ENCODE measurements at regions of chr20 and their contacts with region 1.

Region 1: DNA sequence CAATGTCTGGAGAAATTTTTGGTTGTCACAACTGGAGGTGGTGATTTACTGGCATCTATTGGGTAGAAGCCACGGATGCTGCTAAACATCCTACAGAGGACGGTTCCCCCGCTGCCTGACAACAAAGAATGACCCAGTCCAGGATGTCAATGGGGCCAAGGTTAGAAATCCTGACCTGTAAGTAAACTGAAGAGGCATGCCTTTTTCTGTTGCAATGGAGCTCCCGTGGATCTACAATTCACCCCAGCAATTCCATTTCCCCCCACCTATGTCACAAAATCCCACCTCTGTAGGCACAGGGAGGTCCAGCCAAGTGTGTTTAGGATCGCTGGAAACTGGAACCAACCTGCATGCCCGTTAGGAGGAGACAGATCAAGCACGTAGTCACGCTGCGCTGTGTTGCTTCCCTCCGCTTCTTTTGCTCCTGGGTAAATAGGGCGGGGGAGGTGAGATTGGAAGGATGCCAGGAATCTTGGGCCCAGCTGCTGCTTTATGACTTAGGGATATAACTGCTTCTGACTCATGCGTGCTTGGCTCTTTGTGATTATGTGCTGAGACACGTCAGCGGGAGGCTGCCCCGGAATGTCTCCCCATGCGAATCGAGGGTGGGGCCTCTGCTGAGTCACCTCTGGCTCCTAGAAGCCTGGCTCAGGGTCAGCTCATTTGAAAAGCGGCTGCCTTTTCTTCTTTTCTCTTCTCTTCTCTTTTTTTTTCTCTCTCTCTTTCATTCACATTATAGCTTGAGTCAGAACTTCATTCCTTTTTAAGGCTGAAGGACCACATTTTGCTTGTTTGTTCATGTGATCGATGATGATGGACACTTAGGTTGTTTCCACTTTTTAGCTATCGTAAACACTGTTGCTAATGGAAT is 12.4 kb upstream of the PEDS1 start:
- DNase-seq: peak; percentile 100
- H3K4me3 ChIP-seq: peak overlapping the region in 2 of 3 experiments; percentile 14 to 37
- H3K27ac ChIP-seq: peak overlapping the region; percentile 89
- H3K4me1 ChIP-seq: peaks cover 12% of the 10 kb centered on the region
- H3K27me3 ChIP-seq: no peaks in the 10 kb centered on the region
- CTCF ChIP-seq: no peak
- POLR2A ChIP-seq: peak; percentile 78

Region 2: GRCh38 chr20:50085452-50086365 is 80.2 kb before region 1 on chr20:
- CTCF ChIA-PET with region 1: interaction called, 13 read pairs
- POLR2A ChIA-PET with region 1: no interaction called
- dilution Hi-C with region 1: no loop called
- intact Hi-C with region 1: loop called (anchors 1 kb)
- DNase-seq: peak; percentile 85
- H3K4me3 ChIP-seq: peak overlapping the region in 1 of 3 experiments; percentile 31
- H3K27ac ChIP-seq: peak overlapping the region; percentile 91
- H3K4me1 ChIP-seq: peaks cover 19% of the 10 kb centered on the region
- H3K27me3 ChIP-seq: no peaks in the 10 kb centered on the region
- CTCF ChIP-seq: peak; percentile 71 to 80
- POLR2A ChIP-seq: no peak

Region 3: DNA sequence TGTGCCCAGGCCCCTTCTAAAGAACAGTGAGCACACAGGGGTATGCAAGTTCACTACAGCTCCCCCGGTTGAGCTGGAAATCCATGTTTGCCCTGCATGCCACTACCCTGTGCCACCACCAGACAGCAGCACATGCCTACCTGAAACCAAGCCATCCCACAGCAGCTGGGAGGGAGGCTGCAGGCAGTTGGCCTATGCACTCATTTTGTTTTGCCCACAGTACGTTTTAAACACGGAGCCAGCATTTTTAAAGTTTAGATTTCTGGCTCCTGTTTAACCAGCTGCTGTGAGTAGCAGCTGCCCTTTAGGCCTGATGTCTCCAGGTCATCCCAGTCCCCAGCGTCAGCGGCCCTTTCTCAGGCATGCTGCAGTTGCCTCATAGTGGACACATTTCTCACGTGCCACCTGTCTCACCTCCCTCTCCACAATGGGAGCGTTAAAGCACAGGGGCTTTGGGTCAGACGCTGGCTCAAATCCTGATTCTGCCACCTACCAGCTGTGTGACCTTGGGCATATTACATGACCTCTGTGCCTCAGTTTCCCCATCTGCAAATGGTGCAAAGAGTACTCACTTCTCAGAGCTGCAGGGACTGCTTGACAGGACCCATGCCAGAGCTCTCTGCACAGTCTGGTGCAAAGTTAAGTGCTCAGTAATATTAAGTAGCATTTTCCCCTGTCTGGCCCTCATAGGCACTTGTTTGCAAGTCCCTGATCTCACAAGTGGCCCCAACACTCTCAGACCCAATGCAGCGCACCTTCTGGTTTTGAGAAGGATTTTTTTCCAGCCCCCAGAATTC is 44.8 kb before region 1 on chr20:
- CTCF ChIA-PET with region 1: interaction called, 309 read pairs
- POLR2A ChIA-PET with region 1: interaction called, 6 read pairs
- dilution Hi-C with region 1: no loop called
- intact Hi-C with region 1: loop called (anchors 1 kb)
- DNase-seq: peak; percentile 67
- H3K4me3 ChIP-seq: no peak overlapping the region
- H3K27ac ChIP-seq: no peak overlapping the region
- H3K4me1 ChIP-seq: peaks cover 1% of the 10 kb centered on the region
- H3K27me3 ChIP-seq: no peaks in the 10 kb centered on the region
- CTCF ChIP-seq: peak; percentile 78 to 97
- POLR2A ChIP-seq: peak; percentile 39

Region 4: GRCh38 chr20:50146732-50147662 is 18.9 kb before region 1 on chr20:
- CTCF ChIA-PET with region 1: interaction called, 39 read pairs
- POLR2A ChIA-PET with region 1: interaction called, 6 read pairs
- dilution Hi-C with region 1: no loop called
- intact Hi-C with region 1: loop called (anchors 1 kb)
- DNase-seq: peak; percentile 84
- H3K4me3 ChIP-seq: peak overlapping the region in 1 of 3 experiments; percentile 14
- H3K27ac ChIP-seq: peak overlapping the region; percentile 96
- H3K4me1 ChIP-seq: peaks cover 82% of the 10 kb centered on the region
- H3K27me3 ChIP-seq: no peaks in the 10 kb centered on the region
- CTCF ChIP-seq: no peak
- POLR2A ChIP-seq: peak; percentile 83

Region 5: GRCh38 chr20:50179507-50180016 is 13.6 kb after region 1 on chr20:
- CTCF ChIA-PET with region 1: interaction called, 10 read pairs
- POLR2A ChIA-PET with region 1: interaction called, 4 read pairs
- dilution Hi-C with region 1: no loop called
- intact Hi-C with region 1: no loop called
- DNase-seq: no peak
- H3K4me3 ChIP-seq: no peak overlapping the region
- H3K27ac ChIP-seq: no peak overlapping the region
- H3K4me1 ChIP-seq: no peaks in the 10 kb centered on the region
- H3K27me3 ChIP-seq: no peaks in the 10 kb centered on the region
- CTCF ChIP-seq: no peak
- POLR2A ChIP-seq: no peak

Region 6: DNA sequence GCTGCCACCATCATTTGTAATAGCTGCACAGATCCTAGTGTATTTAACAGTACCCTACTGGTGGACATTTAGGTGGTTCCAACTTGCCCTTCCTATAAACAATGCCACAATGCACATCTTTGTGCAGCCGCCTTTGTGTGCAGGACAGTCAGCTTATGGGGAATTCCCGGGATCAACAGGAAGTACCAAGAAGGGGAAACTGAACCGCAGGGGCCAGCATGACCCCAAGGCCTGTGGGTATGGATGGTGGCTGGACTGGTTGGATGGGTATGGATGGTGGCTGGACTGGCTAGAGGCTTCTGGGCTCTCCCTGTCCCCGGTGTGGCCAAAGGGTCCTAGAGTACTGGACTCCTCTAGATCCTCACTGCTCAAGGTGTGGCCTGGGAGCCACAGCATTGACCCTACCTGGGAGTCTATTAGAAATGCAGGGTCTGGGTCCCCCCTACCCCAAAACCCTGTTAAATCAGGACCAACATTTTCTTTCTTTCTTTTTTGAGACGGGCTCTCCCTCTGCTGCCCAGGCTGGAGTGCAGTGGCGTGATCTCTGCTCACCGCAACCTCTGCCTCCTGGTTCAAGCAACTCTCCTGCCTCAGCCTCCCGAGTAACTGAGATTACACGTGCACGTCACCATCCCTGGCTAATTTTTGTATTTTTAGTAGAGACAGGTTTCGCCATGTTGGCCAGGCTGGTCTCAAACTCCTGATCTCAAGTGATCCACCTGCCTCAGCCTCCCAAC is 71.6 kb after region 1 on chr20:
- CTCF ChIA-PET with region 1: no interaction called
- POLR2A ChIA-PET with region 1: no interaction called
- dilution Hi-C with region 1: no loop called
- intact Hi-C with region 1: no loop called
- DNase-seq: no peak
- H3K4me3 ChIP-seq: no peak overlapping the region
- H3K27ac ChIP-seq: no peak overlapping the region
- H3K4me1 ChIP-seq: no peaks in the 10 kb centered on the region
- H3K27me3 ChIP-seq: peaks cover 9 to 12% of the 10 kb centered on the region in 2 experiments
- CTCF ChIP-seq: no peak
- POLR2A ChIP-seq: no peak

Region 7: DNA sequence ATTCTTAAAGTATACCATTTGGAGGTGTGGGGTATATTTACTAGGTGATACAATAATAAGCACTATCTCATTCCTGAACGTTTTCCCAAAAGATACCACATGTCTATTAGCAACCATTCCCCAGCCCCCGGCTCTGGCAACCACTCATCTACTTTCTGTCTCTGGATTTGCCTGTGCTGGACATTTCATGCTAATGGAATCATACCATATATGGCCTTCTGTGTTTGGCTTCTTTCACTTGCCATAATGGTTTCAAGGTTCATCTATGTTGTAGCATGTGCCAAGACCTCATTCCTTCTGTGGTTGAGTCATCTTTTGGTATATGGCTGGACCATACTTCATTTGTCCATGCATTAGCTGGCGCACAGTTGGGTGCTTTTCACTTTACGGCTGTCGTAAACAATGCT is 668.7 kb after region 1 on chr20:
- CTCF ChIA-PET with region 1: no interaction called
- POLR2A ChIA-PET with region 1: no interaction called
- dilution Hi-C with region 1: no loop called
- intact Hi-C with region 1: no loop called
- DNase-seq: no peak
- H3K4me3 ChIP-seq: no peak overlapping the region
- H3K27ac ChIP-seq: no peak overlapping the region
- H3K4me1 ChIP-seq: no peaks in the 10 kb centered on the region
- H3K27me3 ChIP-seq: no peaks in the 10 kb centered on the region
- CTCF ChIP-seq: no peak
- POLR2A ChIP-seq: no peak

Measured in endothelial cell of umbilical vein (primary cell).